H1 (cell line): ENCODE measurements at regions of chr16 and their contacts with region 1.

Region 1: GRCh38 chr16:8899709-8900317 is 17.7 kb downstream of the LITAFD start:
- DNase-seq: no peak
- H3K4me3 ChIP-seq: no peak overlapping the region
- H3K27ac ChIP-seq: no peak overlapping the region
- H3K4me1 ChIP-seq: no peaks in the 10 kb centered on the region; a peak in 2 of 7 replicates
- H3K27me3 ChIP-seq: no peaks in the 10 kb centered on the region
- CTCF ChIP-seq: peak in 2 of 3 experiments; percentile 11 to 16; a peak in 3 of 4 replicates
- EP300 ChIP-seq: no peak
- POLR2A ChIP-seq: no peak
- RAD21 ChIP-seq: peak; percentile 24 to 36; a peak in 3 of 4 replicates

Region 2: GRCh38 chr16:8781797-8782196 is 118.0 kb before region 1 on chr16:
- CTCF ChIA-PET with region 1: no interaction called
- POLR2A ChIA-PET with region 1: no interaction called
- DNase-seq: no peak
- H3K4me3 ChIP-seq: no peak overlapping the region
- H3K27ac ChIP-seq: no peak overlapping the region
- H3K4me1 ChIP-seq: no peaks in the 10 kb centered on the region; a peak in 1 of 7 replicates
- H3K27me3 ChIP-seq: no peaks in the 10 kb centered on the region
- CTCF ChIP-seq: no peak
- EP300 ChIP-seq: no peak
- POLR2A ChIP-seq: no peak
- RAD21 ChIP-seq: no peak

Region 3: DNA sequence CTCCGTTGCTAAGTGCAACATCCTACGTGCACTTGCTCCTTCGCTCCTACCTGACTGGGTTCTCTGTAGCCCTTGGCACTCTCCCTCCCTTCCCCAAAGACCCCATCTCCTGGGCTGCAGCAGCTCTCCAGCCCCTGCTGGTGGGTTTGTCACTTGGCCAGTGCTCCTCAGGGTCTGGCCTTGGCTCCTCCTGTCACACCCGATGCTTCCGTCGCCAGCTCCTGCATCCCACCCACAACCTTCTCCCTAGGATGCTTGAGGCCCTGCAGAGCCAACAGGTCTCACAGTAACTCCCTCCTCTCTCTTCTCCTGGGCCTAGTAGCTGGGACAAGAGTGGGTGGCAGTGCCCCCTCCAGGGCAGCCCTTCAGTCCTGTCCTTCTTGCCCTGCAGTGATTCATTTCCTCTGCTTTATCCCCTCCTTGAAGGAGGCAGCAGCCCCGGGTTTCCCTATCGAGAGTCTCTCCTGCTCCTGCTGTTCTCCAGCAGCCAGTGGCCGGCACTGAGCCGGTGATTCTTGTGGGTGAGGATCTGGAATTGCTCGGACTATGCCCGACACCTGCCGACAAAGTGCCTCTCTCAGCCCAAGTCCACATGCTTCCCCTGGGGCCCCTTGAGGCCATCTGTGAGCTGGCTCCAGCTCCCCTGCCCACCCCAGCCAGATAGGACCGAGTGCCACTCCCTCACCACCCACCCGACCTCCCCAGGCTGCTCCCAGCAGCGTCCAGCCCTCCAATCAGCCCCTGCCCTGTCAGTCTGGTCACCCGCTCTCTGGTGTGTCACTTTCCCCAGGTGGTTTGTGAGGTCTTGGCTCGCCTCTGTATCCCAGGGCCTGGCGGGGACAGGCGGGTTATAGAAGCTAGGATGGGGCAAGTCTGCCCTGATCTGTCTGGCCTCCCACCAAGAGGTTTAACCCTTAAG is 13.9 kb before region 1 on chr16:
- CTCF ChIA-PET with region 1: interaction called, 14 read pairs
- POLR2A ChIA-PET with region 1: interaction called, 6 read pairs
- DNase-seq: no peak
- H3K4me3 ChIP-seq: no peak overlapping the region; a peak in 1 of 8 replicates
- H3K27ac ChIP-seq: no peak overlapping the region
- H3K4me1 ChIP-seq: peaks cover 0 to 17% (median 9%) of the 10 kb centered on the region in 4 experiments; a peak in 5 of 7 replicates
- H3K27me3 ChIP-seq: no peaks in the 10 kb centered on the region
- CTCF ChIP-seq: peak; percentile 27 to 47 (median 30); a peak in 3 of 4 replicates
- EP300 ChIP-seq: no peak
- POLR2A ChIP-seq: no peak
- RAD21 ChIP-seq: peak in 1 of 2 experiments; percentile 30; a peak in 2 of 4 replicates